OCI-LY7 (cell line): ENCODE measurements at regions of chr12 and their contacts with region 1.

Region 1: GRCh38 chr12:40717576-40717975 is 25.3 kb downstream of the CNTN1 start:
- DNase-seq: no peak
- H3K4me3 ChIP-seq: no peak overlapping the region
- H3K27ac ChIP-seq: no peak overlapping the region
- H3K4me1 ChIP-seq: no peaks in the 10 kb centered on the region
- CTCF ChIP-seq: no peak

Region 2: GRCh38 chr12:40534828-40535227 is 182.7 kb before region 1 on chr12:
- CTCF ChIA-PET with region 1: no interaction called
- POLR2A ChIA-PET with region 1: no interaction called
- intact Hi-C with region 1: no loop called
- DNase-seq: no peak
- H3K4me3 ChIP-seq: no peak overlapping the region
- H3K27ac ChIP-seq: no peak overlapping the region
- H3K4me1 ChIP-seq: no peaks in the 10 kb centered on the region
- CTCF ChIP-seq: no peak

Region 3: GRCh38 chr12:40775661-40776060 is 58.1 kb after region 1 on chr12:
- CTCF ChIA-PET with region 1: no interaction called
- POLR2A ChIA-PET with region 1: no interaction called
- intact Hi-C with region 1: no loop called
- DNase-seq: no peak
- H3K4me3 ChIP-seq: no peak overlapping the region
- H3K27ac ChIP-seq: no peak overlapping the region
- H3K4me1 ChIP-seq: no peaks in the 10 kb centered on the region
- CTCF ChIP-seq: no peak

Region 4: GRCh38 chr12:40946612-40947194 is 229.1 kb after region 1 on chr12:
- CTCF ChIA-PET with region 1: no interaction called
- POLR2A ChIA-PET with region 1: interaction called, 14 read pairs
- intact Hi-C with region 1: no loop called
- DNase-seq: peak; percentile 27
- H3K4me3 ChIP-seq: no peak overlapping the region
- H3K27ac ChIP-seq: no peak overlapping the region
- H3K4me1 ChIP-seq: no peaks in the 10 kb centered on the region
- CTCF ChIP-seq: peak; percentile 90